IMR-90 (cell line): ENCODE measurements at regions of chr2 and their contacts with region 1.

Region 1: DNA sequence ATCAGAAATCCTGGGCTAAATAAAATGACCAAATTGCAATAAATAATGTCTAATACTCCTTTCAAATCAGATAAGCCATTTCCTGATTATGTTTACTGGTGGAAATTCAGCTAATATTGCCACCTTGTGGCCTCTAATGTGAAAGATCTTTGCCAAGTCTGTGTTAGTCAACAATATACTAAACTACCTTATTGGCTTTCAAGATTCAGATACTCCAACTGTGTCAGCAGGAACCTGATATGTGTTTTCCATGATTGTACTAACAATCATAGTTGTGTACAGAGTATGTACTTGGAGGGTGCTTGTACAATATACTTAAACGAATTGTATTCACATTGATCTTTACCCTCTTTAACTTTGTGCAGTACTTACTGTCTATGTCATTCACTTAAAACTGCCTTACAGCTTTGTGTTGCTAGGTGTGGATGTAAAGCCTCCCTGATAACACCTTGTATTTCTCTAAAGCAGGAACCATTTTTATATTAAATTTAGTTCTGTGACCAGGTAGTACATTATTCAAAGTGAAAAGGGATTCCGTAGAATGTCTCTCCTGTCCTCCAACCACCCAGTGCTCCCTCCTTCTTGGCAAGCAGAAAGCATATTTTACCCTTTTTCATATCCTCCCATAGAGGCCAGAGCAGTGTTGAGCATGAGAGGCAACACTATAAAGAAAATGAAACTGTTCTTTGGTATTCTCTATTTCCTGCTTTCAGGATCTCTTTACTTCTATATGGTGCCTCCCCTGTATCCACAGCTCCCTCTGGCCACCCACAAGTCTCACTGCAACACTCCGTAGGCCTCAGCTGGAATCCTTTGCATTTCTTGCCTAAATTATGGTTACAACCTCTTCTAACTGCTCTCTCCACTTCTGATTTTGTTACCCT is 75.2 kb upstream of the C2orf15 start:
- DNase-seq: peak; percentile 61
- ATAC-seq: peak; percentile 97
- H3K4me3 ChIP-seq: no peak overlapping the region
- H3K27ac ChIP-seq: no peak overlapping the region
- H3K4me1 ChIP-seq: no peaks in the 10 kb centered on the region
- H3K27me3 ChIP-seq: peaks cover 5% of the 10 kb centered on the region
- CTCF ChIP-seq: peak; percentile 60
- POLR2A ChIP-seq: no peak
- RAD21 ChIP-seq: peak; percentile 48

Region 2: GRCh38 chr2:98835831-98836385 is 230.4 kb before region 1 on chr2:
- CTCF ChIA-PET with region 1: no interaction called
- POLR2A ChIA-PET with region 1: no interaction called
- dilution Hi-C with region 1: no loop called
- in situ Hi-C with region 1: no loop called
- intact Hi-C with region 1: loop called (anchors 1 kb)
- DNase-seq: no peak
- ATAC-seq: no peak
- H3K4me3 ChIP-seq: no peak overlapping the region
- H3K27ac ChIP-seq: no peak overlapping the region
- H3K4me1 ChIP-seq: no peaks in the 10 kb centered on the region
- H3K27me3 ChIP-seq: peaks cover 16% of the 10 kb centered on the region
- CTCF ChIP-seq: no peak
- POLR2A ChIP-seq: no peak
- RAD21 ChIP-seq: no peak

Region 3: GRCh38 chr2:100562732-100563720 is 1496.7 kb after region 1 on chr2 and contains the start of gene PDCL3:
- CTCF ChIA-PET with region 1: no interaction called
- POLR2A ChIA-PET with region 1: no interaction called
- dilution Hi-C with region 1: no loop called
- in situ Hi-C with region 1: no loop called
- intact Hi-C with region 1: no loop called
- DNase-seq: peak; percentile 99
- ATAC-seq: peak; percentile 97
- H3K4me3 ChIP-seq: peak within 1 kb of the TSS; percentile 73
- H3K27ac ChIP-seq: peak within 1 kb of the TSS; percentile 94
- H3K4me1 ChIP-seq: peaks cover 7% of the 10 kb centered on the region
- H3K27me3 ChIP-seq: no peaks in the 10 kb centered on the region
- CTCF ChIP-seq: 0 out of 2 replicates have a peak, but pooled peaks have one; percentile 3
- POLR2A ChIP-seq: no peak; the same call in 1 of the 2 replicates
- RAD21 ChIP-seq: no peak
- total RNA-seq, gene PDCL3: 9.5 and 22.8 TPM in 2 replicates